Activated CD8-positive, alpha-beta T cell treated with anti-CD3 and anti-CD28 coated beads, Interleukin-2, amount 10 ng/mL, durations not matched to agents 7 days and 5 days (primary cell): ENCODE measurements at regions of chr14 and their contacts with region 1.

Region 1: DNA sequence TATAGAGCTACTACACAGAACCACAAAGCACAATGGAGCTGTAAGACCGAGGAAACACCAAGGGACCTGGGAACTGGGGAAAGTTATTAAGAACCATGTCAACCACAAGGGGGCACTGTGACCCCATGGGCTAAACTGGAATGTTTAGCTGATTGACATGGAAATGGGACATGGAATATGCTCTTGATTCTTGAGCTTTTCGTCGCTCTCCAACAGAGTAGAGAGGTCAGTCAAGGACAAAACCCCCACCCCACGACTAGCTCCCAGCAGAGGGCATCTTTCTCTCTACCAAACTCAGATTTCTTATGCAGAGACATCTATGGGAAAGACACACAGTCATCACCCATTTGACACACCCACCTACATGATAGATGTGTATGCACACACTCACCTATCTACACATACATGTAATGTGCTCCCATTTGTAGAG is 10.1 kb downstream of the NDRG2 start:
- DNase-seq: peak; percentile 82
- ATAC-seq: peak; percentile 80
- H3K4me3 Mint-ChIP-seq: no peak overlapping the region
- H3K27ac Mint-ChIP-seq: no peak overlapping the region
- H3K4me1 Mint-ChIP-seq: no peaks in the 10 kb centered on the region
- H3K27me3 Mint-ChIP-seq: peaks cover 21% of the 10 kb centered on the region

Region 2: DNA sequence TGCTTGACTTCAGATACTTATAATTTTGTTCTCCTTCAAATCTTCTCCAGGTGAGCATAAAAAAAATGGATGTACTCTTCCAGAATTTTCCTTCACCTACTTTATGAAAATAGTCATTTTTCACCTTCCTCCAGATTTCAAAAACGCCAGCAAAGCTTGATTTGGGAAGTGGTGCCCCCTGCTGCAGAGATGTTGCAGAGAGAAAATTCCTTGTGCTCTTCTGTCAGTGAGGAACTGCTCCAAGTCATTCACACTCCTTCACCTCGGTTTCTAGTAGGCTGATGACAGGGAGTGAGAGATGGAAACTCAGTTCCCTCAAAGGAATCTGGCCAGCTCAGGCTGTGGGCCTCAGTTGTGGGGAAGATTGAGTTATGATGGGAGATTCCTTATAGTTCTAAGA is 147.8 kb before region 1 on chr14:
- CTCF ChIA-PET with region 1: no interaction called
- POLR2A ChIA-PET with region 1: no interaction called
- DNase-seq: no peak
- ATAC-seq: no peak
- H3K4me3 Mint-ChIP-seq: no peak overlapping the region
- H3K27ac Mint-ChIP-seq: no peak overlapping the region
- H3K4me1 Mint-ChIP-seq: no peaks in the 10 kb centered on the region
- H3K27me3 Mint-ChIP-seq: peaks cover 41% of the 10 kb centered on the region

Region 3: GRCh38 chr14:20989572-20990551 is 24.9 kb before region 1 on chr14 and contains the start of gene METTL17:
- CTCF ChIA-PET with region 1: interaction called, 15 read pairs
- POLR2A ChIA-PET with region 1: no interaction called
- DNase-seq: peak; percentile 94
- ATAC-seq: peak; percentile 97
- H3K4me3 Mint-ChIP-seq: peak within 1 kb of the TSS; percentile 92
- H3K27ac Mint-ChIP-seq: peak within 1 kb of the TSS; percentile 90
- H3K4me1 Mint-ChIP-seq: peaks cover 41% of the 10 kb centered on the region
- H3K27me3 Mint-ChIP-seq: no peaks in the 10 kb centered on the region
- total RNA-seq, gene METTL17: 97.5 to 103 TPM

Region 4: DNA sequence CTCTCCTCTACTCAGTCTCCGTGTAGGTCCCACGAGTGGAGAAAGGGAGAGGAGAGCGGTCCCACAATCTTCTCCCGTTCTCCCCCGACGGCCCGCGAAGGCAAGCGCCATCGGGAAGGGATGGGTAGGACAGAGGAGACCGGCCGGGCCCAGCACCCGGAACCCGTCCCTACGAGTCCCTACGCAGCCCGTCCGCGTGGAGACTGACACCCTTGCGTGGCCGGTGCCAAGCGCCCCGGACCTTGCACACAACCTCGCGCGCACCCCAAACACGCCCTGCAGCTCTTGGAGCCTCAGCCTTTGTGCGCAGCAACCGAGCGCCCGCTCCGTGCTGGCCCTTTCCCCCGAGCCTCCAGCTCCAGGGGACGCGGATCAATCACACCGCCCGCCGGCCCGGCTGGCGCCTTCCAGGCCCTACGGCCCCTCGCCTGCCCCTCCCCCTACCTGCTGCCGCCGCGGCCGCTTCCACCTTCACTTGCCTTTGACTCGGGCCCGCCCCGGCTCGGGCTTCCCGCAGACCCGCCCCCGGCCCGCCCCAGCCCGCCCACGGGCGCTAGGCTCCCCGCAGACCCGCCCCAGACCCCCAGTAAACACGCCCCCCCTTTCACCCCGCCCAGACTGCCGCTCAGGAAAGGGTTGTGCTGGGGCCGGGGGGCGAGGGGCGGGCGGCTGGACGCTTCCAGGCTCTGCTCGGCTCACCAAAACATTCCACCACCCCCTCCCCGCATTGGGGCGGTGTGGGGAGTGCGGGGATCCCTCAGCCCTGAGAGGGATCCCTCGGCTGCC is 10.0 kb after region 1 on chr14 and contains the start of gene NDRG2:
- CTCF ChIA-PET with region 1: interaction called, 117 read pairs
- POLR2A ChIA-PET with region 1: no interaction called
- DNase-seq: peak; percentile 75
- ATAC-seq: peak; percentile 90
- H3K4me3 Mint-ChIP-seq: peak within 1 kb of the TSS; percentile 72
- H3K27ac Mint-ChIP-seq: peak within 1 kb of the TSS; percentile 13
- H3K4me1 Mint-ChIP-seq: peaks cover 12% of the 10 kb centered on the region
- H3K27me3 Mint-ChIP-seq: peaks cover 30% of the 10 kb centered on the region
- total RNA-seq, gene NDRG2: 6.2 to 7.6 TPM

Region 5: GRCh38 chr14:21049271-21049673 is 34.5 kb after region 1 on chr14:
- CTCF ChIA-PET with region 1: interaction called, 172 read pairs
- POLR2A ChIA-PET with region 1: no interaction called
- DNase-seq: no peak
- ATAC-seq: no peak
- H3K4me3 Mint-ChIP-seq: no peak overlapping the region
- H3K27ac Mint-ChIP-seq: no peak overlapping the region
- H3K4me1 Mint-ChIP-seq: peaks cover 4% of the 10 kb centered on the region
- H3K27me3 Mint-ChIP-seq: peaks cover 39% of the 10 kb centered on the region

Region 6: DNA sequence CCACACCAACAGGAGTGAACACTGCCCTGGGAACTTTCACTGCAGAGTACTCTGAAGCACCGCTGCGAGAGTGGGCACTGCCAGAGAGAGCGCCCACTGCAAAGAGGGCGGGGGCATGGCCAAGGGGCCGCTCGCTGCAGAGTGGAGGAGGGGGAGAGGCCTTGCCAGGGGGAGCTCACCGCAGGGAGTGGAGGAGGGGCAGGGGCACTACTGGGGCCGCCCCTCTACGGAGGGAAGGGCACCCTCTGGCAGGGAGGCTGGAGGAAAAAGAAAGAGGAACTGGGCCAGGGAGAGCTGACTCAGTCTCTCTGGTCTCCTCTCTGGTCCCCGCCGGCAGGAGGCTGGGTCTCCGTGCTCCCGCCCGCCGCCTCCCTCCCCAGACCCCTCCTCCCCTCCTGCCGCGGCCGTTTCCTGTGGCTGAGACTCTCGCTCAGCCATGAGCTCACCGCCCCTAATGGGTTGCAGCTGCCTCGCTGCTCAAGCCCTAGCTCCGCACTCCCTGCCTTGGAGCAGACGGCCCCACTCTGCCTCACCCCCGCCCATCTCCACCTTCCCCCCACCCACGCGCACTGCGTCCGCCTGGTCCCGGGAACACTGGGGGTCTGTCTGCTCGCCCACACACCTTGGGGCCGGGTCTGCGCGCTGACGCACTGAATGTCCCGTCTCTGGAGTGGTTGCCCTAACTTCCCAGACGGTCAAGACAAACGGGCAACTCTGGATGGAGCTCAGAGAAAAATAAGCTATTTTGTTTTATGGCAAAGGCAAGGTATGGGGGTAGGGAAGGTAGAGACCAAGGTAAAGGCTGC is 56.7 kb after region 1 on chr14:
- CTCF ChIA-PET with region 1: interaction called, 44 read pairs
- POLR2A ChIA-PET with region 1: no interaction called
- DNase-seq: peak; percentile 65
- ATAC-seq: peak; percentile 63
- H3K4me3 Mint-ChIP-seq: peak overlapping the region; percentile 68
- H3K27ac Mint-ChIP-seq: no peak overlapping the region
- H3K4me1 Mint-ChIP-seq: peaks cover 37% of the 10 kb centered on the region
- H3K27me3 Mint-ChIP-seq: peaks cover 63% of the 10 kb centered on the region

Region 7: DNA sequence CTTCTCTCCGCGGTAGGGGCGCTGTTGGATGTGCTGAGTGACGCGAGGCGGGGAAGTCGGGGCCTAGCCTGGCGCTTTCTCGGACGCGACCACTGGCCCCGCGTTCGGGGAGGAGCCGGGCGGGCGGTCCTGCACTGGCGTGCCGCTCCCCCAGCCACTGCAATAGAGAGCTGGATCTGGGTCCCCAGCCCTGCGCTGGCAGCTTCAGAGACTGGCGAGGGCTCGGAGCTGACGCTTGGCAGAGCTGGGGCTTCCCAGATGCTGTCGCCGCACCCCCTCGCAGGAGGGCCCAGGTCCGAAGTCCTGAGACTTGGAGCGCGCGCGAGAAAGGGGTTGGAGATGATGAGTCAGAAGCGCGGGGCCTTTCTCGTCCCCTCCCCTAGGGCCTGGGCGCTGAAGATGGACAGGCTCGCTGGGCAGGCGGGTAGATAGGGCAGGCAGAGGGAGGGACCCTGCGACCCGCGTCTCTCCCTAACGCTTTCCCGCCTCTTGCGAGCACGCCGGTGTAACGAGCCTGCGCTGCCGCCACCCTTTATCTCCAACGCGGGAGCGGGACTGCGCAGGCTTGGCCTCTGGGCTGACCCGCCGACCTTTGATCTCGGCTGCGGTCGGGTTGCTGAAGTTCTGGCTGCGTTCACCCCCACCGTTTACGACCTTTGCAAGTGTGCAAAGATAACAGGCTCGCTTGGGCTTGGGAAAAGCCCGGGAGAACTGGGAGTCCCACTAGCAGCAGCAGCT is 89.1 kb after region 1 on chr14:
- CTCF ChIA-PET with region 1: interaction called, 193 read pairs
- POLR2A ChIA-PET with region 1: interaction called, 6 read pairs
- DNase-seq: peak; percentile 97
- ATAC-seq: peak; percentile 89
- H3K4me3 Mint-ChIP-seq: peak overlapping the region; percentile 93
- H3K27ac Mint-ChIP-seq: peak overlapping the region; percentile 91
- H3K4me1 Mint-ChIP-seq: peaks cover 43% of the 10 kb centered on the region
- H3K27me3 Mint-ChIP-seq: peaks cover 14% of the 10 kb centered on the region